ENCODE measurements at regions of chr5 and their contacts with region 1.

Region 1: GRCh38 chr5:154811653-154812365 is 38.6 kb downstream of the FAXDC2 start:
- DNase-seq: no peak
- H3K4me3 ChIP-seq: no peak overlapping the region
- H3K27ac ChIP-seq: no peak overlapping the region
- H3K4me1 ChIP-seq: no peaks in the 10 kb centered on the region
- H3K27me3 ChIP-seq: no peaks in the 10 kb centered on the region
- CTCF ChIP-seq: peak; percentile 57 to 85 (median 72)
- POLR2A ChIP-seq: no peak

Region 2: DNA sequence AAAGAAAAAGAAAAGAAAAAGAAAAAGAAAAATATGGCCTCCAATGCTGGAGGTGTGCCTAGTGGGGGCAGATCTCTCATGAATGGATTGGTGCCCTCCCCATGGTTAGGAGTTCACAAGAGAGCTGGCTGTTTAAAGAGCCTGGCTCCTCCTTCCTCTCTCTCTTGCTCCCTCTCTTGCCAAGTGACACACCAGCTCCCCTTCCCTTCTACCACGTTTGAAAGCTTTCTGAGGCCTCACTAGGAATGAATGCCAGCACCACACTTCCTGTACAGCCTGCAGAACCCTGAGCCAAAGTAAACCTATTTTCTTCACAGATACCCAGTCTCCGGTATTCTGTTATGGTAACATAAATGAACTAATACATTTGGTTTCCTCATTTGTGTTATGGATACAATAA is 635.6 kb before region 1 on chr5:
- intact Hi-C with region 1: no loop called
- DNase-seq: no peak
- H3K4me3 ChIP-seq: no peak overlapping the region
- H3K27ac ChIP-seq: no peak overlapping the region
- H3K4me1 ChIP-seq: peaks cover 4% of the 10 kb centered on the region
- H3K27me3 ChIP-seq: no peaks in the 10 kb centered on the region
- CTCF ChIP-seq: no peak
- POLR2A ChIP-seq: no peak

Region 3: DNA sequence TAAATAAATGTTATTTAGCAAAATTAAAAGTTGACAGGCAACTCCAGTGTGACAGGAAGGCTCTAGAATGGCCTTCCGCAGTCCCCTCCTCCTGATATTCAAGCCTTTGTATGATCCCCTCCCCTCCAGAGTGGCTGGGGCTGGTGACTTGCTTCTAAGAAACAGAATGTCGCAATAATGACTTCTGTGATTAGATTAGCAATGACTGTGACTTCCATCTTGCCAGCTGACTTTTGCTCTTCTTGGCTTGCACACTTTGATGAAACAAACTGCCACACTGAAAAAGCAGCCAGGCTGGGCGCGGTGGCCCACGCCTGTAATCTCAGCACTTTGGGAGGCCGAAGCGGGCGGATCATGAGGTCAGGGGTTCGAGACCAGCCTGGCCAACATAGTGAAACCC is 163.1 kb before region 1 on chr5:
- intact Hi-C with region 1: loop called (anchors 1 kb)
- DNase-seq: no peak
- H3K4me3 ChIP-seq: no peak overlapping the region
- H3K27ac ChIP-seq: no peak overlapping the region
- H3K4me1 ChIP-seq: peaks cover 6% of the 10 kb centered on the region
- H3K27me3 ChIP-seq: no peaks in the 10 kb centered on the region
- CTCF ChIP-seq: no peak
- POLR2A ChIP-seq: no peak

Region 4: GRCh38 chr5:154664869-154665268 is 146.9 kb before region 1 on chr5:
- intact Hi-C with region 1: loop called (anchors 5 kb)
- DNase-seq: no peak
- H3K4me3 ChIP-seq: no peak overlapping the region
- H3K27ac ChIP-seq: no peak overlapping the region
- H3K4me1 ChIP-seq: no peaks in the 10 kb centered on the region
- H3K27me3 ChIP-seq: no peaks in the 10 kb centered on the region
- CTCF ChIP-seq: no peak
- POLR2A ChIP-seq: no peak

Region 5: GRCh38 chr5:154771383-154771901 is 40.4 kb before region 1 on chr5:
- intact Hi-C with region 1: no loop called
- DNase-seq: no peak
- H3K4me3 ChIP-seq: no peak overlapping the region
- H3K27ac ChIP-seq: no peak overlapping the region
- H3K4me1 ChIP-seq: peaks cover 91% of the 10 kb centered on the region
- H3K27me3 ChIP-seq: no peaks in the 10 kb centered on the region
- CTCF ChIP-seq: no peak
- POLR2A ChIP-seq: no peak

Region 6: DNA sequence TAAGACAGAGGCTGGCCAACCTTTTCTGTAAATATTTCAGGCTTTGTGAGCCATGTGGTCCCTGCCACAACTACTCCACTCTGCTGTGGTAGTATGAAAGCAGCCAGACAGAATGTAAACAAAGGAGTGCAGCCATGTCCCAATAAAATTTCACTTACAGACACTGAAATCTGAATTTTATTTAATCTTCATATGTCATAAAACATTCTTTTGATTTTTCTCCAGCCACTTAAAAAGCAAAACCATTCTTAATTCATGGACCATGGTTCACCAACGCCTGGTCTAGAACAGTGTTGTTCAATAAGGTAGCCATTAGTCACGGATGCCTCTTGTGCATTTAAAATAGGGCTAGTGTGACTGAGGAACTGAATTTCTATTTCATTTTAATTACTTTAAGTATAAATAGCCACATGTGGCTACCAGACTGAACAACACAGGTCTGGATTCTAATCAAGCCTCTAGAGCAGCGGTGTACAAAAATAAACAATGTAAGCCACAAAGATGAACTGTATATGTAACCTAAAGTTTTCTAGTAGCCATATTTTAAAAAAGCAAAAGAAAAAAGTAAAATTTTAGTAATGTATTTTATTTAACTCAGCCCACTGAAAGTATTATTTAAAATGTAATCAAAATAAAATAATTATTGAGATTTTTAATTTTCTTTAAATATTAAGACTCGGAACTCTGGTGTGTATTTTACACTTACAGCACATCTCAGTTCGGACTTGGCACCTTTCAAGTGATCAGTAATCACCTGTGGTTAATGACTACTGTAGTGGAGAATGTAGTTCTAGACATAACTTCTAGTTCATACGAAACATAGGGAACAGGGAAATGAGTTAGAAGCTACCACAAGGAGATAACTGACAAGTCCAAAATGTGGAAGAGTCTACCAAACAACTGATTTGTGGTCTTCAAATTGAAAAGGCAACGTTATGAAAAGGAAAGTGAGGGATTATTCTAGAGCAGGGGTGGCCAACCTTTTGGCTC is 111.9 kb after region 1 on chr5:
- intact Hi-C with region 1: no loop called
- DNase-seq: no peak
- H3K4me3 ChIP-seq: no peak overlapping the region
- H3K27ac ChIP-seq: no peak overlapping the region
- H3K4me1 ChIP-seq: no peaks in the 10 kb centered on the region
- H3K27me3 ChIP-seq: no peaks in the 10 kb centered on the region
- CTCF ChIP-seq: no peak
- POLR2A ChIP-seq: no peak

Region 7: DNA sequence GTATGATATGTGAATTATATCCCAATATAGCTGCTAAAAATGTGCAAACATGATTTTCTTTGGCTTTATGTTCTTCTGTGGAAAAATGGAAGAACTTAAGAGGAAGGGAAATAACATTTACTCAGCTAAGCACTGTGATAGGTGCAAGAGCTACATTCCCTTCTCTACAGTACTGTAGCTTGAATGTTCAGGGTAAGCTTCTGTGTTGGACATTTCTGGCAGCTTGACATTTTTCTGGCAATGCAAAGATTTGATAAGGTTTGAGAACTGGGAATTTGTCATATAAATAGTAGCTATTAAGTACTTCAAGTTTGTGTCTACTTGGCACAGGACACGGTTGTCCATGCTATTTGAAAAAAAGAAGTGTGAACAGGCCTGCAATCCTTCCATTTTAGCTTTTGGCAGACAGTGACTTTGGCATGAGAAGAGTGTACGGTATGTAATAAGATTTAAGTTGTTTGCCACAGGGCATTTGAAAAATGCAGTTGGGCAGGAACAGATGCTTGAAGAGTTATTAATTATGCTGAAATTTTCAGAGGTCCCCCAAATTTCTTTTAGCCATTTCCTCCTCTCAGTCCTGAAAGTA is 279.3 kb after region 1 on chr5:
- intact Hi-C with region 1: no loop called
- DNase-seq: no peak
- H3K4me3 ChIP-seq: no peak overlapping the region
- H3K27ac ChIP-seq: no peak overlapping the region
- H3K4me1 ChIP-seq: no peaks in the 10 kb centered on the region
- H3K27me3 ChIP-seq: no peaks in the 10 kb centered on the region
- CTCF ChIP-seq: no peak
- POLR2A ChIP-seq: no peak

Measured in vagina (tissue), 2 donors.